GM10248 (cell line): ENCODE measurements at regions of chr9 and their contacts with region 1.

Region 1: GRCh38 chr9:21018177-21018576 is 13.3 kb downstream of the HACD4 start:
- DNase-seq: no peak
- CTCF ChIP-seq: no peak

Region 2: DNA sequence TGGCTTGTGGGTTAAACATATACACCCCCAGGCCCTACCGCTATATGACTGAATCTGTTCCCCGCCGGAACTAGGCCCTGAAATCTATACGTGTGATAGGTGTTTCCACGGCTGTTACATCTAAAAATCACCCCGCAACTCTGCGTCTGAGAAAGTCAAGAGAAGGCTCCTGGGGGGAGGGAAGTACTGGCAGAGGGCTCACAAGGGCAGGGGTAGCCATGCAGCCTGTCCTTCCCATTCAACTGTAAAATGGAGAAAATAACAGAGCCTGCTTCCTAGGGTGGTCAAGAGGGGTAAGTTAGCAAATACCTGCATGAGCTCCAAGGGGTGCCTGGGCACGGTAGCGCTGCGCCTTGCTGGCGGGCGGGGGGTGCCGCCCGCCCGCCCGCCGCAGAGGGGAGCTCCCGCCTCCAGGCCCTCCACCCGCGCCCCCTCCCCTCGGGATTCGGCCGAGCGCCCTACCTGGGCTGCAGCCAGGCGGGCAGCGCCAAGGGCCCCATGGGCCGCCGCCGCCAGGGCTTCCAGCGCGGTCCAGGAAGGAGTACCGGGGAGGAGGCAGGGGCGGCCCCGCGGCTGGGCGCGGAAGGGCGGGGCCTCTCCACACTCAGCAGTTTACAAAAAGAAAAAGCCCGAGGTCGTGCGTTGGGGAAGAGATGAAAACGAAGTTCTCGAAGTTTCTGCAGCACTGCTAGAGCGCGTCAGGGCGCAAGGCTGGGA is 13.1 kb after region 1 on chr9 and contains the start of gene HACD4:
- CTCF ChIA-PET with region 1: interaction called, 13 read pairs
- POLR2A ChIA-PET with region 1: no interaction called
- DNase-seq: peak; percentile 83
- CTCF ChIP-seq: no peak